Caki2 (cell line): ENCODE measurements at regions of chr21 and their contacts with region 1.

Region 1: GRCh38 chr21:15455819-15456462 is 273.8 kb upstream of the USP25 start:
- DNase-seq: peak; percentile 31

Region 2: DNA sequence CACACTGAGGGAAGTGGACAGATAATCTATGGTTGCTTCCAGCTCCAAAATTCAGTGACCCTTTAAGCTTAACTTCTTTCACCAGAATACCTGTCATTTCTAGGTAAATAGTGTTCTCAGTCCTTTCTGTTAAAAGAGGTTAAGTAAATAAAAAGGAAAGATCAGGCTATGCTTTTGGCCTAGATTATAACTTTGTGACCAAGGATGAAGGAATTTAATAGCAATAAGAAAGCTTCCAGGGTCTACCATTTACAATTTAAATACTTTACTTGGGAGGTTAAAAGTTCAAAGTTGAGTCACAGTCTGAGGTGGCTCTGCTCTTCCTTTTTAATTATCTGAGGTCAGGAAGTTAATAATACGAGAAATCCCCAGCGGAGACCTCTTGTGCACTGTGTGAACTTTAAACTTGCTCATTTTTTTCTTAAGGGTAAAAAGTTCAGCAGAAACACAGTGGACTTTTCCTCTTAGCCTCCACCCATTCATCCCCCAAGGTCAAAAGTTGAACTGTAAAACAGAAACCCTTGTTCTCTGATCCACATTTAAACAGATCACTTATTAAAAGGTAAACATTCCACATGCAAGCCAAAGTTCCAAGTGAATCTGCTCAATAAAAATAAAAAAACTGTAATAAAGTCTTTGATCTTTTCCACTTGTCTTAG is 578.2 kb before region 1 on chr21:
- in situ Hi-C with region 1: loop called (anchors 25 kb)
- DNase-seq: peak; percentile 99

Region 3: GRCh38 chr21:15557925-15558324 is 102.0 kb after region 1 on chr21:
- in situ Hi-C with region 1: no loop called
- DNase-seq: peak; percentile 88